H1 (cell line): ENCODE measurements at regions of chr10 and their contacts with region 1.

Region 1: DNA sequence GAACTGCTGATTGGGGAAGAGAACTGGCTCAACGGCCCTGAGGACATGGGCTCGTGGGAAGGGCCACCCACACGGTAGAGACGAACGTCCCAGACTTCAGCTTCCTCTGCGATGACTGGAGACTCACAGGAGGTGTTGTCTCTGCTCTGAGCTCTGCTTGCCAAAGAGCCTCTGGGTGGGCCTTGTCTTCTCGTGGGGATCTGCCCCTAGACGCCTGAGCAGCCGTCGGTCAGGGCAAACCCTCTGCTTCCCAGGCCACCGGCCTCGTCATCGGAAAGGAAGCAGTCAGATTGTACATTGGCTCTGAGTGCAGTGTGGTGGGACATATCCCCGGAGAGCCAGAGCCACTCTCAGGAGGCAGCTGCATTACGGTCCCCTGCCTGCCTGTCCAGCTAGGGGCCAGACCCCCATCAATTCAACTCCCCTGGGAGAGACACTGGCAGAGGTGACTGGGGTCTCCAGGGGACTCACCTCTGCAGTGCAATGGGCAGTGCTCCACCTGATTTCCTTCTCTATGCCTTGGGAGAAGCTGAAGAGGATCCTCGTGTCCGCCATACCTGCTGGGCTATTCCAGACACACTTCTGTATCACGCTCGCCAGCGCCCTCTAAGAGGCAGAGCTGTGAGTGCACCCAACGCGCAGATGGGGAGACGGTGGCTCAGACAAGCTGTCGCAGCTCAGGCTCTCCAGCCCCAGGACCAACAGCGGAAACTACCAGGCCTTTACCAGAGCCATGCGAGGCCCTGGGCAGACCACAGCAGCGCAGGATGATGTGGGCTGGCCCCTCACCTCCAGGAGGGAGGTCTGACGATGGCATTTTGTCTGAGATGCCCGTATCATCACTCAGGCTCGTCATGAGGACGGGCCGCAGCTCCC is 227.4 kb downstream of the TCERG1L start:
- DNase-seq: peak; percentile 49 to 86
- H3K4me3 ChIP-seq: no peak overlapping the region
- H3K27ac ChIP-seq: no peak overlapping the region
- H3K4me1 ChIP-seq: peaks cover 0 to 5% (median 0%) of the 10 kb centered on the region in 4 experiments; a peak in 2 of 7 replicates
- H3K27me3 ChIP-seq: no peaks in the 10 kb centered on the region; a peak in 3 of 7 replicates
- CTCF ChIP-seq: peak; percentile 77 to 92 (median 92)
- EP300 ChIP-seq: no peak
- POLR2A ChIP-seq: no peak
- RAD21 ChIP-seq: peak; percentile 71 to 84

Region 2: GRCh38 chr10:131065673-131066300 is 18.4 kb before region 1 on chr10:
- CTCF ChIA-PET with region 1: interaction called, 12 read pairs
- POLR2A ChIA-PET with region 1: no interaction called
- DNase-seq: no peak
- H3K4me3 ChIP-seq: no peak overlapping the region
- H3K27ac ChIP-seq: no peak overlapping the region
- H3K4me1 ChIP-seq: peaks cover 0 to 12% (median 6%) of the 10 kb centered on the region in 4 experiments; a peak in 6 of 7 replicates
- H3K27me3 ChIP-seq: no peaks in the 10 kb centered on the region
- CTCF ChIP-seq: no peak
- EP300 ChIP-seq: no peak
- POLR2A ChIP-seq: no peak
- RAD21 ChIP-seq: no peak

Region 3: DNA sequence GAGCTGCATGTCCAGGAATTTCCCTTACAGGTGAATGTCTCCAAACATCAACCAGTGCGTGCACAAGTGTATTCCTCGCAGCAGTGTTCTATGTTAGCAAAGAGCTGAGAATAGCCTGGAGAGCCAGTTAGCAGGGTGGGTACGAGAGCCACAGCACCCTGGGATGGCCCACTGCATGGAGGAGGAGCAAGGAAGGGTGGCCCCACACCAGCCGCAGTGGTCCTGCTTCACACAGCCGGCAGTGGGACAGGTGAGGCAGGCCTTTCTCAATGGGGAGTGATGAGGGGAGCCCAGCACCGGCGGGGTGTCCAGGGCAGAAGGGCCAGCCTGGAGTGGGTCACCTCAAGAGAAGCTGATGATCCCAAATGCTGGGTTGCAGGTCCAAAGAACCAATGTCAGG is 13.3 kb before region 1 on chr10:
- CTCF ChIA-PET with region 1: interaction called, 12 read pairs
- POLR2A ChIA-PET with region 1: no interaction called
- DNase-seq: no peak
- H3K4me3 ChIP-seq: no peak overlapping the region
- H3K27ac ChIP-seq: no peak overlapping the region
- H3K4me1 ChIP-seq: peaks cover 0 to 9% (median 5%) of the 10 kb centered on the region in 4 experiments; a peak in 5 of 7 replicates
- H3K27me3 ChIP-seq: no peaks in the 10 kb centered on the region
- CTCF ChIP-seq: no peak
- EP300 ChIP-seq: no peak
- POLR2A ChIP-seq: no peak
- RAD21 ChIP-seq: no peak

Region 4: GRCh38 chr10:131312478-131312836 is 228.3 kb after region 1 on chr10:
- CTCF ChIA-PET with region 1: interaction called, 11 read pairs
- POLR2A ChIA-PET with region 1: no interaction called
- DNase-seq: peak; percentile 64 to 86
- H3K4me3 ChIP-seq: peak overlapping the region; percentile 50 to 65 (median 53)
- H3K27ac ChIP-seq: no peak overlapping the region
- H3K4me1 ChIP-seq: peaks cover 3 to 11% (median 3%) of the 10 kb centered on the region in 4 experiments; a peak in 6 of 7 replicates
- H3K27me3 ChIP-seq: peaks cover 0 to 14% (median 5%) of the 10 kb centered on the region in 4 experiments; a peak in 5 of 7 replicates
- CTCF ChIP-seq: peak; percentile 91 to 93 (median 92)
- EP300 ChIP-seq: no peak
- POLR2A ChIP-seq: no peak
- RAD21 ChIP-seq: peak; percentile 69 to 84